Activated T-helper 2 cell treated with anti-CD3 and anti-CD28 coated beads, Interferon-gamma antibody, Interleukin-2, Interleukin-4, amounts not matched to agents 10 μg/mL and 5 μg/mL and 100 μg/mL, durations not matched to agents 14 hours and 24 hours and 36 hours (primary cell): ENCODE measurements at regions of chr4 and their contacts with region 1.

Region 1: DNA sequence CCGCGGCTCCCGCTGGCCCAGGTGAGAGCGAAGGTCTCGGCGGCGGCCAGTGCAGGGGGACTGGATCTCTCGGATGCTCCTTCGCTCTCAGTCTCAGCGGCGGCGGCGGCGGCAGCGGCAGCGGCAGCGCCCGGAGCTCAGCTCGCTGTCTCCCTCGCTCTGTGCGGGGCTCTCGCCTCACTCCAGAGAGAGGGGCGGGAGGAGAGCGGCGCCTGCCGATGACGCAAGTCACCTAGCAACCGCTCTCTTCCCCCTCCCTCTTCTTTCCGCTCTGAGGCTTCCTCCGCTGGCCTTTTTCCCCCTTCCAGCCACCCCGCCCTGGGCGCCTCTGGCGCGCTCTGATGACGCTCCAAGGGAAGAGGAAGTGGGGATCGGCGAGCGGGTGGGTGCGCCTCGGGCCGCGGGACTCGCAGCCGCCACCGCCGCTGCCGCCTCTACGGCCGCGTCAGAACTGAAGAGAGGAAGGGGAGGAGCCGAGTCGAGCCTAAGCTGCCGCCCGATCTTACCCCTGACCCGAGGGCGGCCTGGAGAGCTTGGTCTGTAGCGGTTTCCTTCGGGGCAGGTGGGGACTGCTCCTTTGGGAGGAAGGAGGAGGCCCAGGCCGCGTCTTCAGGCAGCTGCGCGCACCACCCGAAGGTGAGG is at the start of gene FBXW7:
- DNase-seq: peak; percentile 100
- H3K4me3 Mint-ChIP-seq: peak within 1 kb of the TSS; percentile 97
- H3K27ac Mint-ChIP-seq: peak within 1 kb of the TSS; percentile 99
- H3K4me1 Mint-ChIP-seq: peaks cover 50% of the 10 kb centered on the region
- H3K27me3 Mint-ChIP-seq: no peaks in the 10 kb centered on the region
- total RNA-seq, gene FBXW7: 37.8 and 47.3 TPM in 2 replicates

Region 2: GRCh38 chr4:151099229-151099975 is 1436.6 kb before region 1 on chr4 and contains the start of gene RPS3A:
- intact Hi-C with region 1: loop called (anchors 1 kb)
- DNase-seq: peak; percentile 98
- H3K4me3 Mint-ChIP-seq: peak within 1 kb of the TSS; percentile 98
- H3K27ac Mint-ChIP-seq: peak within 1 kb of the TSS; percentile 97
- H3K4me1 Mint-ChIP-seq: peaks cover 45% of the 10 kb centered on the region
- H3K27me3 Mint-ChIP-seq: no peaks in the 10 kb centered on the region
- total RNA-seq, gene RPS3A: 1,827 and 1,844 TPM in 2 replicates

Region 3: DNA sequence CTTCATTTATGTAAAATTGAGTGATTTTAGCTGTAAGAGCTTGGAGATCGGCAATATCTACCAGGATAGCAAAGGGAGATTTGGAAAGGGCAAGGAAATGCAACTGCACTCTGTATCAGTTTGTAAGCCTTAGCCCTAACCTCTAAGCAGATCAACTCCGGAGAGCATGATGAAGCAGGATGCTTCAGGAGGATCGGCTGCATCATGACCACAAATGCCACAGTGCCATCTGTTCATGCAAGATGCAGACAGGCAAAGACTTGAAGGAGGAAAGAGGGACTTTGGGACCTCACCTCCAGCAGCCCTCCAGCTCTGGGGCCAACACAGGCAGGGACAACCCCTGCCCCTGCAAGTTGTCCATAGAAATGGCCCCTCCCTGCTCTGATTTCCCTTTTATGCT is 397.6 kb before region 1 on chr4:
- intact Hi-C with region 1: no loop called
- DNase-seq: peak; percentile 22
- H3K4me3 Mint-ChIP-seq: no peak overlapping the region
- H3K27ac Mint-ChIP-seq: no peak overlapping the region
- H3K4me1 Mint-ChIP-seq: peaks cover 14% of the 10 kb centered on the region
- H3K27me3 Mint-ChIP-seq: no peaks in the 10 kb centered on the region

Region 4: DNA sequence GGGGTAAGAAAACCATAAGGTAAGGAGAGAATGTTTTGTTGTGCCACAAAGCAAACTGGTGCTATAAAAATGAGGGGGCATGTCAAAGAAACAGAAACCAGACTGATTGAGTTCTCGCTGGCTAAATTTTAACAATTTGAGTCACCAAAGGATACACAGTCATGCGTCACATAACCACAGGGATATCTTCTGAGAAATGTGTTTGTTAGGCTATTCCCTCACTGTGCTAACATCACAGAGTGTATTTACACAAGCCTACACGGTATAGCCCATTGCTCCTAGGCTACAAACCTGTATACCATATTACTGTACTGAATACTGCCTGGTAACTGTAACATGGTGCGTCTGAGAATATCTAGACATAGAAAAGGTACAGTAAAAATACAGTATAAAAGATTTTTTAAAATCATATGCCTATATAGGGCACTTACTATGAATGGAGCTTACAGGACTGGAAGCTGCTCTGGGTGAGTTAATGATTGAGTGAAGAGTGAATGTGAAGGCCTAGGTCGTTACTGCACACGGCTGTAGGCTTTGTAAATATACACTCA is 50.2 kb before region 1 on chr4:
- intact Hi-C with region 1: loop called (anchors 1 kb)
- DNase-seq: peak; percentile 44
- H3K4me3 Mint-ChIP-seq: peak overlapping the region; percentile 13
- H3K27ac Mint-ChIP-seq: peak overlapping the region; percentile 33
- H3K4me1 Mint-ChIP-seq: peaks cover 37% of the 10 kb centered on the region
- H3K27me3 Mint-ChIP-seq: no peaks in the 10 kb centered on the region

Region 5: DNA sequence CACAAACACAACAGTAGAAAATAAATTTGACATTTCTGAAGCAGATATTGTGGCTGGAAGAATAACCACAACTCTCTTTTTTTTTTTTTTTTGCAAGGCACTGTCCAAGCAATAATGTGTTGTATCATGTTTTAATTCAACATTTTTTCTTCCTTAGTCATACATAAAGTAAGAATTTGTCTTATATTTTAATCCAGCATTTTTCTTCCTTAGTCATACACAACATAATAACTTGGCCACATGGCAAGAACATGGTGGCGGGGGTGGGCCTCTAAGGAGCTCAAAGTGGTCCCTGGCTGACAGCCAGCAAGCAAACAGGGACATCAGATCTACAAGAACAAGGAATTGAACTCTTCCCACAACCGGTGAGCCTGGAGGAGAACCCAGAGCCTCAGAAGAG is 20.3 kb before region 1 on chr4:
- intact Hi-C with region 1: no loop called
- DNase-seq: no peak
- H3K4me3 Mint-ChIP-seq: no peak overlapping the region
- H3K27ac Mint-ChIP-seq: no peak overlapping the region
- H3K4me1 Mint-ChIP-seq: peaks cover 17% of the 10 kb centered on the region
- H3K27me3 Mint-ChIP-seq: no peaks in the 10 kb centered on the region

Region 6: DNA sequence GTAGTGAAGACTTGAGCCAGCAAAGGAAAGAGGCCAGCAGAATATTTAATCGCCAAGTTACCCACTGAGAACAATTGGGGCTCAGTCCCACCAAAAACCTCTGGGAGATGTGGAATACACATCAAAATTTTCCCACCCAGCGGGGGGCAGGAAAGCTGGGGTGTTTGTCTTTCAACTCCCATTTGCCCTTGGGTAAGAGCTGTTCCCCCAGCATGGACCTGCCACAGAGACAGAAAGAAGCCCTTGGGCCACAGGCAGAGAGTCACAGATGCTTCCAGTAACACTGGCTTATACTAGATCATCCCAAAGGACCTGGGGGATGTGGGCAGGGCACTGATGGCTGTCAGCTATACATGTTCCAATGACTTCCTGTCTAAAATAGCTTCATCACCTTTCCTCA is 18.7 kb after region 1 on chr4:
- intact Hi-C with region 1: loop called (anchors 1 kb)
- DNase-seq: no peak
- H3K4me3 Mint-ChIP-seq: no peak overlapping the region
- H3K27ac Mint-ChIP-seq: peak overlapping the region; percentile 96
- H3K4me1 Mint-ChIP-seq: peaks cover 36% of the 10 kb centered on the region
- H3K27me3 Mint-ChIP-seq: no peaks in the 10 kb centered on the region

Region 7: GRCh38 chr4:152679414-152680281 is 143.6 kb after region 1 on chr4 and contains the start of gene TMEM154:
- intact Hi-C with region 1: loop called (anchors 1 kb)
- DNase-seq: peak; percentile 71
- H3K4me3 Mint-ChIP-seq: peak within 1 kb of the TSS; percentile 87
- H3K27ac Mint-ChIP-seq: peak within 1 kb of the TSS; percentile 71
- H3K4me1 Mint-ChIP-seq: peaks cover 55% of the 10 kb centered on the region
- H3K27me3 Mint-ChIP-seq: no peaks in the 10 kb centered on the region
- total RNA-seq, gene TMEM154: 10.3 and 12.1 TPM in 2 replicates